ENCODE measurements at regions of chrX and their contacts with region 1.

Region 1: GRCh38 chrX:105136786-105137185 is 83.7 kb downstream of the TEX13A start:
- DNase-seq: peak; percentile 94
- ATAC-seq: peak; percentile 88
- H3K4me3 ChIP-seq: no peak overlapping the region
- H3K27ac ChIP-seq: peak overlapping the region; percentile 87
- H3K4me1 ChIP-seq: peaks cover 46% of the 10 kb centered on the region
- H3K27me3 ChIP-seq: no peaks in the 10 kb centered on the region
- CTCF ChIP-seq: no peak

Region 2: GRCh38 chrX:104987063-104987462 is 149.7 kb before region 1 on chrX:
- CTCF ChIA-PET with region 1: no interaction called
- POLR2A ChIA-PET with region 1: no interaction called
- intact Hi-C with region 1: loop called (anchors 2 kb)
- DNase-seq: peak; percentile 91
- ATAC-seq: peak; percentile 99
- H3K4me3 ChIP-seq: no peak overlapping the region
- H3K27ac ChIP-seq: peak overlapping the region; percentile 39
- H3K4me1 ChIP-seq: peaks cover 19% of the 10 kb centered on the region
- H3K27me3 ChIP-seq: no peaks in the 10 kb centered on the region
- CTCF ChIP-seq: no peak

Region 3: GRCh38 chrX:105098201-105098600 is 38.6 kb before region 1 on chrX:
- CTCF ChIA-PET with region 1: no interaction called
- POLR2A ChIA-PET with region 1: no interaction called
- intact Hi-C with region 1: loop called (anchors 2 kb)
- DNase-seq: peak; percentile 13
- ATAC-seq: no peak
- H3K4me3 ChIP-seq: no peak overlapping the region
- H3K27ac ChIP-seq: peak overlapping the region; percentile 74
- H3K4me1 ChIP-seq: peaks cover 13% of the 10 kb centered on the region
- H3K27me3 ChIP-seq: no peaks in the 10 kb centered on the region
- CTCF ChIP-seq: no peak

Region 4: DNA sequence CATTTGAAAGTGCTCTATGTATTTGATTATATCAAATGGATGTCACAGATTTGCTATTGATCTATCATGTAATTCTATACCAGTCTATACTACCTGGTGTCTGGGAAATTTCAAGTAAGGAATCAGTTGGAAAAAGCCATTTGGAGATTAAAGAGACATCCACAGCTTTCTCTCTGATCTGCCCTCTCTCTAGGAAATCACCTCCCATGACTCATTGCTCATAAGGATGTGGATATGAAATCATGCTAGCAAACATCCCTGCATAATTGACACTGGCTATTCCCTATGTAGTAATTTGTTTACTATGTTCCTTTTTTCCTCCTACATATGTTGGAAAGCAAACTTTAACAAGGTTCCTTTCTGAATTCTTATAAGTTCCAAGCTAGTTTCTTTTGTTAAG is 10.6 kb before region 1 on chrX:
- CTCF ChIA-PET with region 1: no interaction called
- POLR2A ChIA-PET with region 1: no interaction called
- intact Hi-C with region 1: loop called (anchors 1 kb)
- DNase-seq: peak; percentile 70
- ATAC-seq: peak; percentile 89
- H3K4me3 ChIP-seq: no peak overlapping the region
- H3K27ac ChIP-seq: no peak overlapping the region
- H3K4me1 ChIP-seq: peaks cover 11% of the 10 kb centered on the region
- H3K27me3 ChIP-seq: no peaks in the 10 kb centered on the region
- CTCF ChIP-seq: no peak

Region 5: DNA sequence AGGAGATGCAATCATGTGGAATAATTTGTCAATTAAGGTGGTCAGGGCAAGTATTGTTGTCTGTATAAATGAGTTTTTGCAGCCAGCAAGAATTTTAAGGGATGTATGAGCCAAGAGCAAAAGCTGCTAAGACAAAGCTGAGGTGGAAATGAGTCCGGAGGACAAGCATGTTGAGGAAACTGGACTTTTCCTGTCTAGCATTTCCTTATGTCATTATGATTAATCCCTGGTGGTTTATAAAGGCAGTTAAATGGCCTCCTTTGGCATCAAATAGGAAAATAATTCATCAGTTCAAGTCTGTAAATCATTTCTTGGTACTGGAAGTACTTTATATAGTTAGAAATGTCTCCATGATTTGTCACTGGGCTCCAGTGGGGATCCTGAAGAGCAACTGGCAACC is 145.3 kb after region 1 on chrX:
- CTCF ChIA-PET with region 1: no interaction called
- POLR2A ChIA-PET with region 1: no interaction called
- intact Hi-C with region 1: no loop called
- DNase-seq: peak; percentile 37
- ATAC-seq: no peak
- H3K4me3 ChIP-seq: no peak overlapping the region
- H3K27ac ChIP-seq: no peak overlapping the region
- H3K4me1 ChIP-seq: no peaks in the 10 kb centered on the region
- H3K27me3 ChIP-seq: no peaks in the 10 kb centered on the region
- CTCF ChIP-seq: no peak

Measured in PC-3 (cell line).